ENCODE measurements at regions of chr5 and their contacts with region 1.

Region 1: GRCh38 chr5:132406144-132406783 is 36.8 kb downstream of the SLC22A5 start:
- DNase-seq: no peak
- ATAC-seq: no peak
- H3K4me3 ChIP-seq: no peak overlapping the region
- H3K27ac ChIP-seq: no peak overlapping the region
- H3K4me1 ChIP-seq: peaks cover 3% of the 10 kb centered on the region
- H3K27me3 ChIP-seq: no peaks in the 10 kb centered on the region

Region 2: GRCh38 chr5:132495667-132496190 is 89.5 kb after region 1 on chr5:
- intact Hi-C with region 1: loop called in 1 of 4 experiments (anchors 5 kb)
- DNase-seq: peak; percentile 92 to 97 (median 96)
- ATAC-seq: peak; percentile 75 to 76
- H3K4me3 ChIP-seq: peak overlapping the region; percentile 68
- H3K27ac ChIP-seq: peak overlapping the region; percentile 98
- H3K4me1 ChIP-seq: peaks cover 14% of the 10 kb centered on the region
- H3K27me3 ChIP-seq: no peaks in the 10 kb centered on the region